ENCODE measurements at regions of chr17 and their contacts with region 1.

Region 1: DNA sequence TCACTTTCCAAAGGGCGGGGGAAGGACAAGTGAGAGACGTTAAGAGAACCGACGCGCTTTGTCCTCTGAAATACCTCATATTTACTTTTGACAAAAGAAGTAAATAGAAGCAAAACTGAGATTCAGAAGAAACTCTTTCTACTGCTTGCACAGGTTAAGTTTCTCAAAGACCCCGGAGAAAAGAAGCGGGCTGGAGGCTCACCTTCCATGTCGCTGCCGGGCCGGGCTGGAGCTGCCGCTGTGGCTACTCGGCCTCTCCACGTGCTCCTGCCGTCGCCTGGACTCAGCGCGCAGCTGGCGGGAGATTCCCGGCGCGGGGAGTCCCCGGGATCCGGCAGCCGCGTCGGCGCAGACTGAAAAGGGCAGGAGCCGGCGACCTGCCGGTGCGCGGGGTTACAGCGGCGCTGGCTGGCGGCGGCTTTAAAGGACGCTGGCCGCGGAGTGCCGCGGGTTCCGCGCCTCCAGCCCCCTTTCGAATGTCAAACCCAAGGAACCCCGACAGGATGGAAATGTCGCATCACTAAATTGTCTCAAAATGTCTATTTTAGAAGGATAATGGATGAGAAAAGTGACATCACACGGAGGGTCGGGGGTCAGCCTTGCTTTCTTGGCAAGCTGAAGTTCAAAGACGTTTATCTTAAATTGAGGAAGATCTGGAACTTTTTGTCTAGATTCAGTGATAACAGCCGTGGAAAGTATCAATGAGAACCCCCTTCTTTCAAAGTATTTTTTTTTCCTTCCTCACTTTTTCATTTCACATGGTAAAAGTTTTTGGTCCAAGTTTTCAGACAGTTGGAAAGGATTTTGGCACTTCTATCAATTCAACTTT is at the start of gene IKZF3:
- DNase-seq: peak; percentile 78
- ATAC-seq: peak; percentile 58
- H3K4me3 Mint-ChIP-seq: peak within 1 kb of the TSS; percentile 98
- H3K27ac Mint-ChIP-seq: peak within 1 kb of the TSS; percentile 99
- H3K4me1 Mint-ChIP-seq: peaks cover 71% of the 10 kb centered on the region
- H3K27me3 Mint-ChIP-seq: no peaks in the 10 kb centered on the region
- CTCF ChIP-seq: no peak
- total RNA-seq, gene IKZF3: 208 and 220 TPM in 2 replicates

Region 2: GRCh38 chr17:38702166-38702899 is 1161.8 kb before region 1 on chr17:
- CTCF ChIA-PET with region 1: no interaction called
- POLR2A ChIA-PET with region 1: no interaction called
- intact Hi-C with region 1: loop called (anchors 10 kb)
- DNase-seq: peak; percentile 77
- ATAC-seq: peak; percentile 28
- H3K4me3 Mint-ChIP-seq: peak overlapping the region; percentile 96
- H3K27ac Mint-ChIP-seq: peak overlapping the region; percentile 99
- H3K4me1 Mint-ChIP-seq: peaks cover 48% of the 10 kb centered on the region
- H3K27me3 Mint-ChIP-seq: no peaks in the 10 kb centered on the region
- CTCF ChIP-seq: no peak

Region 3: DNA sequence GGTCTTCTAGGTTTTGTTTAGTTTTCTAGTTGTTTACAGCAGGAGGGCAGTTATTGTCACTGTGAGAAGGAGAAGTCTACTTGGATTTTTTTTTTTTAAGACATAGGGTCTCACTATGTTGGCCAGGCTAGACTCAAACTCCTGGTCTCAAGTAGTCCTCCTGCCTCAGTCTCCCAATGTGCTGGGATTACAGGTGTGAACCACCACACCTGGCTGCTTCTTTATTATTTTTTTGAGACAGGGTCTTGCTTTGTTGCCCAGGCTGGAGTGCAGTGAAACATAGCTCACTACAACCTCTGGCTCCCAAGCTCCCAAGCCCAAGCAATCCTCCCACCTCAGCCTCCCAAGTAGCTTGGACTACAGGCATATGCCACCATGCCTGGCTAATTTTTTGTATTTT is 570.1 kb before region 1 on chr17:
- CTCF ChIA-PET with region 1: no interaction called
- POLR2A ChIA-PET with region 1: no interaction called
- intact Hi-C with region 1: no loop called
- DNase-seq: no peak
- ATAC-seq: no peak
- H3K4me3 Mint-ChIP-seq: no peak overlapping the region
- H3K27ac Mint-ChIP-seq: no peak overlapping the region
- H3K4me1 Mint-ChIP-seq: no peaks in the 10 kb centered on the region
- H3K27me3 Mint-ChIP-seq: no peaks in the 10 kb centered on the region
- CTCF ChIP-seq: no peak

Region 4: GRCh38 chr17:39730095-39730921 is 133.8 kb before region 1 on chr17 and contains the start of gene MIEN1:
- CTCF ChIA-PET with region 1: interaction called, 9 read pairs
- POLR2A ChIA-PET with region 1: interaction called, 28 read pairs
- intact Hi-C with region 1: loop called (anchors 1 kb)
- DNase-seq: peak; percentile 99
- ATAC-seq: peak; percentile 91
- H3K4me3 Mint-ChIP-seq: peak within 1 kb of the TSS; percentile 88
- H3K27ac Mint-ChIP-seq: peak within 1 kb of the TSS; percentile 86
- H3K4me1 Mint-ChIP-seq: peaks cover 21% of the 10 kb centered on the region
- H3K27me3 Mint-ChIP-seq: no peaks in the 10 kb centered on the region
- CTCF ChIP-seq: peak; percentile 64
- total RNA-seq, gene MIEN1: 42.2 and 45.7 TPM in 2 replicates

Region 5: DNA sequence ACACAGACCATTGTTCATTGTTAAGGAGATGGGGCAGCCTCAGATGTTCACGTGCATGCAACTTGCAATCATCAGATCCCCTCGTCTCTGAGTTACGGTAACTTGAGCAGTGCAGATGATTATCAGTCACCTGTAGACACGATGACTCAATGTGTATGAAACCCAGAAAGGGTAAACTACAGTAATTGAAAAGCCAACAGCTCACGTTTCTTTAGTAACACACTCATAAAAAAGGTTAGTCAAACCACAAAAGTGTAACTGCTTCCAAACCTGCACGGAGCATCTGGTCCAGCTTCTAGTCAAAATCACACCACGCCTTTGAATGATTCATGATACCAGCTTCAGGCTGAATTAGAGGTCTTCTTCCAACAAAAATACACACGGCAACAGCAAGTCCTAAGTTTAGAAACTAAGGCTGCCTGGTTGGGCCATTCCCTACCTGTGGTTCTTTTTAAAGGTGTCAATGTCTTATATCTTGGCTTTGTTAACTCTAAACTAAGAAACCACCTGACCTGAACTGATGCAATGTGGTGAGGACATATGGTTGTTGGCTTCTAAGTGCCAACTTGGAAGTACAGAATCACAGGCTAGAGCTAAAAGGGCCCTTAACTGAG is 94.1 kb before region 1 on chr17:
- CTCF ChIA-PET with region 1: interaction called, 3 read pairs
- POLR2A ChIA-PET with region 1: interaction called, 50 read pairs
- intact Hi-C with region 1: loop called (anchors 2 kb)
- DNase-seq: no peak
- ATAC-seq: peak; percentile 68
- H3K4me3 Mint-ChIP-seq: peak overlapping the region; percentile 58
- H3K27ac Mint-ChIP-seq: peak overlapping the region; percentile 96
- H3K4me1 Mint-ChIP-seq: peaks cover 99% of the 10 kb centered on the region
- H3K27me3 Mint-ChIP-seq: no peaks in the 10 kb centered on the region
- CTCF ChIP-seq: no peak

Region 6: GRCh38 chr17:39794249-39794970 is 69.7 kb before region 1 on chr17:
- CTCF ChIA-PET with region 1: no interaction called
- POLR2A ChIA-PET with region 1: interaction called, 28 read pairs
- intact Hi-C with region 1: loop called (anchors 1 kb)
- DNase-seq: no peak
- ATAC-seq: peak; percentile 94
- H3K4me3 Mint-ChIP-seq: peak overlapping the region; percentile 66
- H3K27ac Mint-ChIP-seq: peak overlapping the region; percentile 93
- H3K4me1 Mint-ChIP-seq: peaks cover 85% of the 10 kb centered on the region
- H3K27me3 Mint-ChIP-seq: no peaks in the 10 kb centered on the region
- CTCF ChIP-seq: no peak

Region 7: GRCh38 chr17:39845052-39845846 is 18.9 kb before region 1 on chr17:
- CTCF ChIA-PET with region 1: interaction called, 4 read pairs
- POLR2A ChIA-PET with region 1: interaction called, 5 read pairs
- intact Hi-C with region 1: loop called (anchors 2 kb)
- DNase-seq: no peak
- ATAC-seq: no peak
- H3K4me3 Mint-ChIP-seq: no peak overlapping the region
- H3K27ac Mint-ChIP-seq: peak overlapping the region; percentile 3
- H3K4me1 Mint-ChIP-seq: peaks cover 80% of the 10 kb centered on the region
- H3K27me3 Mint-ChIP-seq: no peaks in the 10 kb centered on the region
- CTCF ChIP-seq: no peak

Measured in activated B cell treated with CpG ODN at 0.5 μM for 24 hours (primary cell).